ENCODE measurements at regions of chr4 and their contacts with region 1.

Region 1: GRCh38 chr4:139734875-139735380 is 69.3 kb downstream of the MGST2 start:
- DNase-seq: peak; percentile 78
- H3K4me3 Mint-ChIP-seq: peak overlapping the region; percentile 61
- H3K27ac Mint-ChIP-seq: no peak overlapping the region
- H3K4me1 Mint-ChIP-seq: peaks cover 22% of the 10 kb centered on the region
- H3K27me3 Mint-ChIP-seq: peaks cover 29% of the 10 kb centered on the region

Region 2: GRCh38 chr4:139593091-139593564 is 141.8 kb before region 1 on chr4:
- CTCF ChIA-PET with region 1: no interaction called
- intact Hi-C with region 1: no loop called
- DNase-seq: no peak
- H3K4me3 Mint-ChIP-seq: no peak overlapping the region
- H3K27ac Mint-ChIP-seq: no peak overlapping the region
- H3K4me1 Mint-ChIP-seq: no peaks in the 10 kb centered on the region
- H3K27me3 Mint-ChIP-seq: peaks cover 2% of the 10 kb centered on the region

Region 3: GRCh38 chr4:139901531-139902320 is 166.8 kb after region 1 on chr4:
- CTCF ChIA-PET with region 1: interaction called, 3 read pairs
- intact Hi-C with region 1: loop called (anchors 5 kb)
- DNase-seq: no peak
- H3K4me3 Mint-ChIP-seq: no peak overlapping the region
- H3K27ac Mint-ChIP-seq: no peak overlapping the region
- H3K4me1 Mint-ChIP-seq: peaks cover 14% of the 10 kb centered on the region
- H3K27me3 Mint-ChIP-seq: peaks cover 2% of the 10 kb centered on the region

Region 4: GRCh38 chr4:140012688-140013486 is 278.0 kb after region 1 on chr4:
- CTCF ChIA-PET with region 1: interaction called, 6 read pairs
- intact Hi-C with region 1: loop called (anchors 1 kb)
- DNase-seq: peak; percentile 69
- H3K4me3 Mint-ChIP-seq: no peak overlapping the region
- H3K27ac Mint-ChIP-seq: no peak overlapping the region
- H3K4me1 Mint-ChIP-seq: peaks cover 8% of the 10 kb centered on the region
- H3K27me3 Mint-ChIP-seq: peaks cover 1% of the 10 kb centered on the region

Region 5: GRCh38 chr4:140252742-140253555 is 518.0 kb after region 1 on chr4:
- CTCF ChIA-PET with region 1: interaction called, 3 read pairs
- intact Hi-C with region 1: loop called (anchors 1 kb)
- DNase-seq: peak; percentile 65
- H3K4me3 Mint-ChIP-seq: peak overlapping the region; percentile 5
- H3K27ac Mint-ChIP-seq: no peak overlapping the region
- H3K4me1 Mint-ChIP-seq: peaks cover 11% of the 10 kb centered on the region
- H3K27me3 Mint-ChIP-seq: peaks cover 6% of the 10 kb centered on the region

Region 6: GRCh38 chr4:140326395-140326993 is 591.6 kb after region 1 on chr4:
- CTCF ChIA-PET with region 1: no interaction called
- intact Hi-C with region 1: loop called (anchors 2 kb)
- DNase-seq: peak; percentile 32
- H3K4me3 Mint-ChIP-seq: no peak overlapping the region
- H3K27ac Mint-ChIP-seq: no peak overlapping the region
- H3K4me1 Mint-ChIP-seq: no peaks in the 10 kb centered on the region
- H3K27me3 Mint-ChIP-seq: no peaks in the 10 kb centered on the region

Region 7: GRCh38 chr4:140609548-140610425 is 874.9 kb after region 1 on chr4:
- CTCF ChIA-PET with region 1: no interaction called
- intact Hi-C with region 1: loop called (anchors 10 kb)
- DNase-seq: no peak
- H3K4me3 Mint-ChIP-seq: no peak overlapping the region
- H3K27ac Mint-ChIP-seq: no peak overlapping the region
- H3K4me1 Mint-ChIP-seq: peaks cover 1% of the 10 kb centered on the region
- H3K27me3 Mint-ChIP-seq: peaks cover 6% of the 10 kb centered on the region

Region 8: DNA sequence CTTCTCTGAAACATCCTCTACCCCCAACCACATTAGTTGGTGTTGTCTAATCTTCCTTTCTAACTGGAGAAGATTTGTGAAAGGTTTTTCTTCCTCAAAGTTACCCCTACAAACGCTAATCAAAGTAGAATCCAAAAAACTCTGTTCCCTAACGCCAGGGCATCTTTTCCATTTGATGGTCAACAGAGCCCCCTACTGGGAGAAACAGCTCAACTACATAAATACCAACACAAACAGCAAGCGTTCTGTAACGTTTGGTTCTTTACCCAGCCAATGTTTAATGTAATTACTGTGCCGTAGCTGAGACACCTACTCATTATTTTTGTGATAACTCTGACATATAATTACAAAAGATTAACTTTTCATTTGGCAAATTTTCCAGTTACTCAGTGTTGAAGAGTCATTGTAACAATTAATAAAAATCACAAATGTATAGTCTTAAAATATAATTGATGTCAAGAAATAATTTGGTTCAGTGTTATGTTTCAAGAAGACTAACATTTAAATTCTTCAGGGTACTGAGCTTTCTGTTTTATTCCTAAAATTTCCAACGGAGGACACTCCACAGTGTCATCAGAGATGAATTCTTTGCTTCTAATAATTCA is 1116.2 kb after region 1 on chr4:
- CTCF ChIA-PET with region 1: no interaction called
- intact Hi-C with region 1: loop called (anchors 10 kb)
- DNase-seq: peak; percentile 54
- H3K4me3 Mint-ChIP-seq: no peak overlapping the region
- H3K27ac Mint-ChIP-seq: no peak overlapping the region
- H3K4me1 Mint-ChIP-seq: no peaks in the 10 kb centered on the region
- H3K27me3 Mint-ChIP-seq: peaks cover 21% of the 10 kb centered on the region

Measured in activated naive CD4-positive, alpha-beta T cell treated with anti-CD3 and anti-CD28 coated beads for 36 hours (primary cell).